ENCODE measurements at regions of chrX and their contacts with region 1.

Region 1: GRCh38 chrX:72018277-72019112 is 107.8 kb downstream of the NHSL2 start:
- DNase-seq: peak; percentile 55
- ATAC-seq: peak; percentile 89
- H3K4me3 ChIP-seq: peak overlapping the region in 1 of 2 experiments; percentile 38; a peak in 2 of 4 replicates
- H3K27ac ChIP-seq: peak overlapping the region; percentile 35; the same call in 1 of the 2 replicates
- H3K4me1 ChIP-seq: peaks cover 7 to 12% of the 10 kb centered on the region in 2 experiments; a peak in 3 of 4 replicates
- H3K27me3 ChIP-seq: no peaks in the 10 kb centered on the region
- CTCF ChIP-seq: peak; percentile 42 to 60 (median 48); a peak in 5 of 6 replicates
- POLR2A ChIP-seq: no peak
- RAD21 ChIP-seq: peak; percentile 43; the same call in 1 of the 2 replicates

Region 2: GRCh38 chrX:72003811-72004750 is 14.4 kb before region 1 on chrX:
- CTCF ChIA-PET with region 1: interaction called, 11 read pairs
- POLR2A ChIA-PET with region 1: no interaction called
- RAD21 ChIA-PET with region 1: interaction called in 1 of 2 experiments, 5 read pairs
- intact Hi-C with region 1: no loop called
- DNase-seq: peak; percentile 40
- ATAC-seq: peak; percentile 97
- H3K4me3 ChIP-seq: peak overlapping the region in 1 of 2 experiments; percentile 15; a peak in 1 of 4 replicates
- H3K27ac ChIP-seq: no peak overlapping the region
- H3K4me1 ChIP-seq: peaks cover 0 to 12% of the 10 kb centered on the region in 2 experiments; a peak in 2 of 4 replicates
- H3K27me3 ChIP-seq: no peaks in the 10 kb centered on the region
- CTCF ChIP-seq: peak; percentile 43 to 46 (median 44); a peak in 4 of 6 replicates
- POLR2A ChIP-seq: no peak
- RAD21 ChIP-seq: peak; percentile 66

Region 3: DNA sequence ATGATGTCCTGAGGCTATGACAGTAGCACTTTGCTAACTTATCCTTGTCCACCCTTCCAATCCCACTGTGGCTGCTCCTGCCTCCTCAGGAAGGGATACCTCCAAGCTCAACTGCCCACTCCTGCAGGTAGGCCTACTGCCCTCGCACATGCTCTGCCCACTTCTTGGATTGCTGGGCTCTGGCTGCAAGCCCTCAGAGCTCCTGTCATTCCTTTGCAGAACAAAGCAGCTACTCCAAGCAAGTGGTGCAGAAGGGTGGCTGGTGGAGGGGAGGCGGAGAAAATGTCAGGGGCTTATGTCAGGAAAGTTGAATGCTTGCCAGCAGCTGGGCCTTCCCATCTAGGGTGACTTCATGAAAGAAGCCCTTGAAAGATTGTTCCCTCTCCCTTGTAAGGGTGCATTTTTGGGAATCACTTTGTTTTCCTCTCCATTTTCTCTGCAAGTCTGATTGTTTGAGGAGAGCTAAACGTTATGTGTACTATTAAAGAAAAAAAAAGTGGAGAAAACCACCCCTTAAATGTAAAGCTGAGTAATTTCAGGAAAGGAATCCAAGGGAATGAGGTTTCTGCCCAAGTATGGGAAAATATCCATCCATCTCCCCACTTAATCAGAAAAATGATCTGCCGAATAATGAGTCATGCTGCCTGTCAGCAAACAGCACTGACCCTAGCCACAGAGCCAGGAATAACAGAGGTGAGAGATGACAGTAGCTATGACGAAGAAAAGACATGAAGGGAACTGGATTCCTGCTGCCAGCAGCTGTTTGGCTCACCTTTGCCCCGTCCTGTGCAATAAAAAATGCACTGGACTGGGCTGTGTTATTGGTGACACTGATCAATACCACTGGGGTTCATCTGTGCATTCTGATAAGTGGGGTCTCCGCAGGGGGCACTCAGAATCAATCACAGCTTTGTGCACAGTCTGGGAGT is 11.3 kb after region 1 on chrX:
- CTCF ChIA-PET with region 1: interaction called, 21 read pairs
- POLR2A ChIA-PET with region 1: interaction called, 4 read pairs
- RAD21 ChIA-PET with region 1: no interaction called
- intact Hi-C with region 1: no loop called
- DNase-seq: no peak
- ATAC-seq: peak; percentile 80
- H3K4me3 ChIP-seq: no peak overlapping the region
- H3K27ac ChIP-seq: no peak overlapping the region
- H3K4me1 ChIP-seq: peaks cover 12 to 18% of the 10 kb centered on the region in 2 experiments
- H3K27me3 ChIP-seq: no peaks in the 10 kb centered on the region
- CTCF ChIP-seq: no peak
- POLR2A ChIP-seq: no peak
- RAD21 ChIP-seq: no peak

Measured in HCT116 (cell line).